ENCODE measurements at regions of chr3 and their contacts with region 1.

Region 1: DNA sequence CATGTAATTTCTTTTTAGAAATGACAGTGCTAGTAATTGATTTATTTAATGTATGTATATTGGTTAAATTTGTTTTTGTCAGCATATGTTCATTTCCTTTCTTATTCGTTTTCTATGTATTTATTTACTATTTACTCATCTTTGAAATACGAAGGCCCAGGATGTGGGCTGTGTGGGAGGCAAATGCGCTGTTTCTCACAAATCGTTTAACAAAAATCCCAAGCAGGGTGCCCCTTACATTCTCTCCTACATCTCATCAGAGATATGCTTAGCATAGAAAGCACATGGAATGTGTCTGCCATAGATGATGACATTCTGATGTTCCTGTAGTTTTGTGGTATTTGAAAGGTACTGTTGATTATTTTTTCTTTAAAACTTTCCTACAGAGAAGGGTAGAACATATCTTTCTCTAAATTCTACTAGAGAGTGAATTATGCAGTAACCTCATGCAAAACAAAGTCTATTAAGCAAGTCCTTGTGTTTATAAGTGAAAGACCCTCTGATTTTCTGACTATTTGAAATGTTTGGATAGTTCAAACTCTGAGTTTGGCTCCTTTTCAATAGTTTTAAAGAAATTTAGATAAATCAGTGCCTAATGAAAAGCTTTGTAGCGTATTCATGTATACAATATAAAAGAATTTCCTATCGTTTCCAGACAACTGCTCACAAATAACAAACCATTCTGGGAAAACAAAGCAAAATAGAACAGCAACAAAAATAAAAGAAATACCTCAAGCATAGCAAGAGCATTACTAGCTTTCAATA is 111.1 kb upstream of the VGLL3 start:
- DNase-seq: no peak
- H3K4me3 ChIP-seq: no peak overlapping the region
- CTCF ChIP-seq: no peak
- POLR2A ChIP-seq: no peak

Region 2: DNA sequence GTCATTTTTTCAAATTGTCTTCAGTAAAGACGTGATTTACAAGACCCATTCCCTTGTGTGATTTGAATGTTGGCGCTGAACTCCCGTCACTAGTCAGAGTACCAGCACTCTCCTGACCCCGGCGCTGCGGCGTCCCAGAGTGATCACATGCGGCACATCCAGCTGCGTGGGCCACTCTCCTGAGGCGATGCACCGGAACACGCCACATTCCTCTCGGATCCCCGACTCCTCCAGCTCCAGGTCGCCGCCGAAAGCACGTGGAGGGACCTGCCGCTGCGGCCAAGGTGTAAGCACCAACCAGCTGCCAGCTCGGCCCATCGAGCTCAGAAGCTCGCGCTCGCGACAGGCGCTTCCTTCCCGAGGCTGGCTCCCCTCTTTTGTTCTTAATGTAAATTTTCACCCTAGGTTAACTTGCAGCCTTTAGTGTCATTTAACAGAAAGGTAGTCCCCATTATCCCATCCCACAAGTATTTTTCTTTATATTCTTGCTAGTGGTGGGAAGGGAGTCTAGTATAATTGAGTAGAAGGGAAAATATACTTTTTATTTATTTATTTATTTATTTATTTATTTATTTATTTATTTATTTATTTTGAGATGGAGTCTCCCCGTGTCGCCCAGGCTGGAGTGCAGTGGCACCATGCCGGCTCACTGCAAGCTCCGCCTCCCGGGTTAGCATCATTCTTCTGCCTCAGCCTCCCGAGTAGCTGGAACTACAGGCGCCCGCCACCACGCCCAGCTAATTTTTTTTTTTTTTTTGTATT is 49.4 kb before region 1 on chr3:
- intact Hi-C with region 1: loop called (anchors 2 kb)
- DNase-seq: no peak
- H3K4me3 ChIP-seq: no peak overlapping the region
- CTCF ChIP-seq: no peak
- POLR2A ChIP-seq: no peak

Region 3: DNA sequence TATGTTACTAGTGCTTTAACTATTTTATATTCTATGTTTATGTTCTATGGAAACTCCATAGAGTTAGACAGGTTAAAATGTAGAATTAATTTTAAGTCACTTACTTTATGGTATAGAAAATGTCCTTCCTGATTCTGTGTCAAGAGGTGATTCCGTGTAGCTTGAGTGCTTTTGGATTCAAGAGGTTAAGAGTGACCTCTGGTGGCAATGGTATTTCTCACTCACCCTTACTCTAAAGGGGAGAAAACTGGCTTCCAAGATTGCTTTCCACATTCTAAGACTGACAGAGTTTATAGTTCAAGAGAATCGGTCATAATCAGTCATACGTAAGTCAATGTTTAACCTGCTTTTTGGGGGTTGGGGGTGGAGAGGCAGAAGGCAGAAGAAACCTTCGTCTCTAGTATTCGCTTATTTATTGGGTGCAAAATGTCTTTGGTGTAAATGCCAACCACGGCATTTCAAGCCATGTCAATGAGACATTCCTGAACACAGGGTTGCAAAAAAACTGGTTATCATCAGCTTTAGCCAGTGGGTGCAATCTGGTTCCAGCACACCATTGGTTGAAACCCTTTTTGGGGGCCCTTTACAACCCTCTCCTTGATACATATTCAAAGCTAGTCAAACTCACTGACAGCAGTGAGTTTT is 19.1 kb before region 1 on chr3:
- intact Hi-C with region 1: no loop called
- DNase-seq: peak in 1 of 2 donors; percentile 16
- H3K4me3 ChIP-seq: no peak overlapping the region
- CTCF ChIP-seq: no peak
- POLR2A ChIP-seq: no peak